ENCODE measurements at regions of chr3 and their contacts with region 1.

Region 1: GRCh38 chr3:177050501-177051237 is 146.6 kb downstream of the TBL1XR1 start:
- DNase-seq: no peak
- ATAC-seq: peak in 7 of 8 donors; percentile 48 to 87 (median 65)
- H3K4me3 ChIP-seq: no peak overlapping the region
- H3K27ac ChIP-seq: no peak overlapping the region
- H3K4me1 ChIP-seq: peaks cover 0 to 23% (median 15%) of the 10 kb centered on the region in 9 donors
- H3K27me3 ChIP-seq: no peaks in the 10 kb centered on the region
- CTCF ChIP-seq: peak in 8 of 9 donors; percentile 29 to 76 (median 62)

Region 2: GRCh38 chr3:177190756-177191681 is 140.3 kb after region 1 on chr3:
- intact Hi-C with region 1: loop called in 8 of 10 experiments (anchors 2 to 10 kb)
- DNase-seq: no peak
- ATAC-seq: peak in 5 of 8 donors; percentile 19 to 43 (median 25)
- H3K4me3 ChIP-seq: no peak overlapping the region
- H3K27ac ChIP-seq: peak overlapping the region in 9 of 10 donors; percentile 6 to 72 (median 46)
- H3K4me1 ChIP-seq: peaks cover 0 to 82% (median 48%) of the 10 kb centered on the region in 9 donors
- H3K27me3 ChIP-seq: no peaks in the 10 kb centered on the region
- CTCF ChIP-seq: no peak

Region 3: DNA sequence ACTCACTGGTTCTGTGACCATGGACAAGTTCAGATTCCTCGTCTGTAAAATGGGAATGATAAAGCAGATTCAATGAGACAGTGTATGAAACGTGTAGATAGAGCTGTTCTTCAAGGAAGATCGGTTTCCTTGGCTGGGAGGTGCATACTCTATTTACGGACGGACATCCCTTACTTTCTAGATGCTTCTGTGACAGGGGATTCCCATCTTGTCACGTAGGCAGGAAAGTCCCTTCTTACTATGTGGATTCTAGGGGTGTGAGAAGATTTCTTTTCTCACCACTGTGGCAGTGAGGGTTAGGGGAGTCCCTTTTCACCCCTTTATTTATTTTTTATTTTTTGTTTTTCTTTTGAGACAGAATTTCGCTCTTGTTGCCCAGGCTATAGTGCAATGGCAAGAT is 327.5 kb after region 1 on chr3:
- intact Hi-C with region 1: loop called in 1 of 10 experiments (anchors 10 kb)
- DNase-seq: no peak
- ATAC-seq: no peak
- H3K4me3 ChIP-seq: no peak overlapping the region
- H3K27ac ChIP-seq: no peak overlapping the region
- H3K4me1 ChIP-seq: no peaks in the 10 kb centered on the region
- H3K27me3 ChIP-seq: no peaks in the 10 kb centered on the region
- CTCF ChIP-seq: no peak

Region 4: DNA sequence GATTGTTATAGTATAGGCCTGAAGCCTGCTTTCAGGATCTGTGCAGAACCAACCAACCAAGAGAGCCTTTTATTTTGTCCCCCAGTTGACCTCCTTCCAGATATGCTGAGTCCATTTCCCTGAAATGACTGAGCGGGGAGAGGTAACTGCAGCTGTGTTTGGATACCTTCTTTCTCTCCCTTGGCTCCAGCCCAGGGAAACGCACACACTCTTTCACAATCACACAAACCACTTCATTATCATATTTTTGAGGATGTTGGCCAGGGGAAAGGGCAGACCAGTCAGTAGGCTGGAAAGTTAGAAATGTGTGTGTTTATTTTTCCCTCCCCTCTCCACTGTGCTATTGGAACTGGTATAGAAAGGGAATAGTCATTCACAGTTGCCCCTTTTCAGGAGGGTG is 564.3 kb after region 1 on chr3:
- intact Hi-C with region 1: loop called in 1 of 10 experiments (anchors 10 kb)
- DNase-seq: peak; percentile 60 to 62
- ATAC-seq: peak; percentile 63 to 96 (median 74)
- H3K4me3 ChIP-seq: no peak overlapping the region
- H3K27ac ChIP-seq: peak overlapping the region in 3 of 10 donors; percentile 7 to 56 (median 18)
- H3K4me1 ChIP-seq: peaks cover 5 to 46% (median 35%) of the 10 kb centered on the region in 9 donors
- H3K27me3 ChIP-seq: no peaks in the 10 kb centered on the region
- CTCF ChIP-seq: no peak

Measured in heart right ventricle (tissue), 16 donors.